IMR-90 (cell line): ENCODE measurements at regions of chr2 and their contacts with region 1.

Region 1: DNA sequence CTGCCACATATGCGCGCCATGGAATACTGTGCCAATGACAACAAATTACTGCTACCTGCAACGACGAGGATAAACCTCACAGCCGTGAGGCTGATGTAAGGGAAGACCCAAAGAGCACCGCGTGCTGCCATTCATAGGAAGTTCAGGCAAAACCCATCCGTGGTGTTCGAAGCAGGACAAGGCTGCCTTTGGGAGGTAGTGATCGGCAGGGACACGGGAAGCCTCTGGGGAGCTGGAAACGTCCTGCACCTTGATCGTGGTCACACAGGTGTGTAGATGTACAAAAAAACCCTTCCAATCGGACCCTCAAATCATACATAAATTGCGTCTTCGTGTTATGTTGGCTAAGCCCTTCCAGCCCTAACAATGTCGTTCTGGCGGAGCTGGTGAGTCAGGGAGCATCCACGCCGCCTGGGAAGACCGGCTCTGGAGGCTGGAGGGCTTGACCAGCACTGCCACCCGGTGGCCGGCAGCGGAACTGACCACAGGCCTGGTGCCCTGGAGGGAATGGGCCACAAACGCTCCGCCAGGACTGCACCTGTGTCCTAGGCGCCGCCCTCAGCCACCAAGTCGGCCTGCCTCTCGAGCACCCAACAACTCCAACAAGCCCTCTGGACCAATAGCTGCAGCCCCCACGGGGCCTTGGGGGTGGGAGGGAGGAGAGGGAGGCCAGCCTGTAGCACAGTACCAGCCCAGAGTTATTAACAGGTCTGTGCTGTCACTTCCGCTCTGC is 4.1 kb upstream of the NEURL3 start:
- DNase-seq: peak; percentile 84
- ATAC-seq: peak; percentile 99
- H3K4me3 ChIP-seq: no peak overlapping the region
- H3K27ac ChIP-seq: no peak overlapping the region
- H3K4me1 ChIP-seq: peaks cover 5% of the 10 kb centered on the region
- H3K27me3 ChIP-seq: peaks cover 31% of the 10 kb centered on the region
- CTCF ChIP-seq: peak; percentile 97
- POLR2A ChIP-seq: 0 out of 2 replicates have a peak, but pooled peaks have one; percentile 43
- RAD21 ChIP-seq: peak; percentile 98

Region 2: DNA sequence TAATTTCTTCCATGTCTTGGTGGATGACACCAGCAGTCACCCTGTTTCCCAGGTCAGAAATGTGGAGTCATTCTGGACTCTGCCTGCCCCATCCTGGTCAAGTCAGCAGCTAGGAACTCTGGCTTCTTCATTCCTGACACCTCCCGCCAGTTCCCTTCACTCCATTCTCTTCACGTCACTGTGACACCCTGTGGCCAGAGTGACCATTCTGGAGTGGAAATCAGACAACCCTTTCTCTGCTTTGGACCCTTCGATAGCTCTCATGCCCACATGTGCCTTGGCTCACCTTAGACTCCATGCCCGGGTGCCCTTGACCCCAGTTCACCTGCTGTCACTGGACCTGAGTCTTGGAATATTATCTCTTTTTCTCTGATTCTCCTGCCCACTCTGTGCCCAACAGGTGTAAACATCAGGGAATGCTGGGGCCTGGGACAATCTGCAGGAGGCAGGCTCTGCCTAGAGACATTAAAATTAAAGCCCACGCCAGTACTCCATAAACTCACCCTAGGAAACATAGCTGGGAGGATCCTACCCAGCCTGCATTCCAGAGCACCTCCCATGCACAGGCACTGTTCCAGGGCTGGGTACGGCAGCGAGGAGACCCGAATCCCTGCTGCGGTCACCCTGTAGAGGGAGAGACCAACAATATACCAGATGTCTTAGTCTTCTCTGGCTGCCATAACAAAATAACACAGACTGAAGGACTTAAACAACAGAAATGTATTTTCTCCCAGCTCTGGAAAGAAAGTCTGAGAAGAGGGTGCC is 1147.9 kb before region 1 on chr2:
- CTCF ChIA-PET with region 1: no interaction called
- POLR2A ChIA-PET with region 1: no interaction called
- dilution Hi-C with region 1: no loop called
- in situ Hi-C with region 1: no loop called
- intact Hi-C with region 1: no loop called
- DNase-seq: no peak
- ATAC-seq: no peak
- H3K4me3 ChIP-seq: no peak overlapping the region
- H3K27ac ChIP-seq: no peak overlapping the region
- H3K4me1 ChIP-seq: peaks cover 5% of the 10 kb centered on the region; the same call in 1 of the 2 replicates
- H3K27me3 ChIP-seq: peaks cover 2% of the 10 kb centered on the region; the same call in 1 of the 2 replicates
- CTCF ChIP-seq: no peak
- POLR2A ChIP-seq: no peak
- RAD21 ChIP-seq: no peak

Region 3: DNA sequence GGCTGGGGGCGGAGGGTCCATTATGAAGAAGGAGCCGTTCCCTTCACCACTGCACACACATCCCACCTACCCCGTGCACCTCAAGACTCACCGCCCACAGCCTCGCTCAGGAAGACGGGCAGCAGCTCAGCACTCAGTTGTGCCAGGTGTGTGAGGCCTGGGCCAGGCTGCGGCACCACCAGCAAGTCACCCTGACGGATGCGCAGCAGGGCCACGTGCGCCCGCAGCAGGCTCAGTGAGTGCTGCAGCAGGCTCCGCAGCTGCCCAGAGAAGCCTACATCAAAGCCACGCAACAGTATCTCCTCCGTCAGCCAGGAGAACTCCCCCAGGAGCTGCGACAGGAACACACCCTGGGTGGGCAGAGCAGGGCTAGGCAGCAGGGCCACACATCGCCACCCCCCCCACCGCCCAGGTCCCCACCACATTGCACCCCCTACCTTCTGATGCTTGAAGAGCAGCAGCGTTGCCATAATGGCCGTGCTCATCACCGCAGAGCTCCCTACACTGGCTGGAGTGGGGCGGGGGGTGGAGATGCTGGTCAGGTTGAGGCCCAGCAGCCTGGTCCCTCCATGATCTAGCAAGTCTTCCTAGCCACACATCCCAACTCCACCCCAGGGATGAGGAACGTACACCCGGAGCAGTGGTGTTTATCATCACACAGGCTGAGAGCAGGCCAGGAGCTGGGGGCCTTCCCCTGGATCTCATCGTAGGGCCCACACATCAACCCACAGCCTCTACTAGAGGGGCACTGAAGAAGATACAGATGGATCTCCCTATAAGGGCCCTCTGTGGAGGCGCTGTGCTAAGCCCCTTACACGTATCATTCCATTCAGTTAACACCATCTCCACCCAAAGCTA is 484.7 kb before region 1 on chr2:
- CTCF ChIA-PET with region 1: interaction called, 3 read pairs
- POLR2A ChIA-PET with region 1: no interaction called
- dilution Hi-C with region 1: no loop called
- in situ Hi-C with region 1: loop called (anchors 25 kb)
- intact Hi-C with region 1: no loop called
- DNase-seq: no peak
- ATAC-seq: no peak
- H3K4me3 ChIP-seq: no peak overlapping the region
- H3K27ac ChIP-seq: no peak overlapping the region
- H3K4me1 ChIP-seq: no peaks in the 10 kb centered on the region
- H3K27me3 ChIP-seq: no peaks in the 10 kb centered on the region
- CTCF ChIP-seq: no peak
- POLR2A ChIP-seq: no peak
- RAD21 ChIP-seq: no peak

Region 4: DNA sequence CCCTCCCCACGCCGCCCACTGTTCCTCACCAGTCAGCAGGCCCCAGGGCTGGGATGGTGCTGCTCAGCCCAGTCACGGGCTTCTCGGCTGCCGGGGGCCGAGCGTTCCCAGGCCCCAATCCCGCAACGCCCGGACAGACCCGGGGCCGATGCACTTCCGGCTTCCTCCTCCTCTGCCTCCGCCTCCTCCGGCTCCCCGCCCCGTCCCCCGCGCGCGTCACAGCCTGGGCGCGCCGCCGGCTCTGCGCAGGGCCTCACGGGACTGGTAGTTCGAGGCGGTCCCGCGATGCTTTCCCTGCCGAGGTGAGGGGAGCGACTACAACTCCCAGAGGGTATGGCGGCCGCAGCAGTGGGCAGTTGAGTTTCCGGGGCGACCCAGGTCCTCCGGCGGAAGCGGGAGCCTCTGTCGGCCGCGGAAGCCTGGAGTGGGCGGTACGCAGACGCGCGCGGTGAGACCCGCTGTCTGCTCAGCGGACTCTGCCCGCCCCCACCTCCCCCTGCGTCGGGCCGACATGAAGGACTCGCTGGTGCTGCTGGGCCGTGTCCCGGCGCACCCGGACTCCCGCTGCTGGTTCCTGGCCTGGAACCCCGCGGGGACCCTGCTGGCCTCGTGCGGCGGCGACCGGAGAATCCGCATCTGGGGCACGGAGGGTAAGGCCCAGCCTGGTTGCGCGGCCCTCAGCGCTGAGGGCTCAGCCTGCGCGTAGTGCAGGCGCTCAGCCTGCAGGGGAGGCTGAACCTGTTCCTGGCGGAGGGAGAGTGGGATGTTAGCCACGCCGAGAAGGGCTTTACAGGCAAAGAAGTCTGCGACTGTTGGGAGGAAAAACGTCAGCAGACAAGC is 243.2 kb before region 1 on chr2 and contains the starts of genes CIAO1 and TMEM127:
- CTCF ChIA-PET with region 1: no interaction called
- POLR2A ChIA-PET with region 1: no interaction called
- dilution Hi-C with region 1: no loop called
- in situ Hi-C with region 1: no loop called
- intact Hi-C with region 1: loop called (anchors 2 kb)
- DNase-seq: peak; percentile 98
- ATAC-seq: peak; percentile 97
- H3K4me3 ChIP-seq: peak within 1 kb of the TSS; percentile 84
- H3K27ac ChIP-seq: peak within 1 kb of the TSS; percentile 82
- H3K4me1 ChIP-seq: peaks cover 5% of the 10 kb centered on the region
- H3K27me3 ChIP-seq: no peaks in the 10 kb centered on the region
- CTCF ChIP-seq: 0 out of 2 replicates have a peak, but pooled peaks have one; percentile 17
- POLR2A ChIP-seq: peak; percentile 84
- RAD21 ChIP-seq: no peak; the same call in 1 of the 2 replicates
- total RNA-seq, gene CIAO1: 85.5 and 94.3 TPM in 2 replicates
- total RNA-seq, gene TMEM127: 20.0 and 35.7 TPM in 2 replicates

Region 5: GRCh38 chr2:96407041-96407918 is 102.0 kb before region 1 on chr2:
- CTCF ChIA-PET with region 1: interaction called, 10 read pairs
- POLR2A ChIA-PET with region 1: no interaction called
- dilution Hi-C with region 1: no loop called
- in situ Hi-C with region 1: loop called (anchors 5 kb)
- intact Hi-C with region 1: loop called (anchors 1 kb)
- DNase-seq: peak; percentile 79
- ATAC-seq: peak; percentile 97
- H3K4me3 ChIP-seq: no peak overlapping the region
- H3K27ac ChIP-seq: no peak overlapping the region
- H3K4me1 ChIP-seq: peaks cover 2% of the 10 kb centered on the region; the same call in 1 of the 2 replicates
- H3K27me3 ChIP-seq: peaks cover 37% of the 10 kb centered on the region
- CTCF ChIP-seq: peak; percentile 81
- POLR2A ChIP-seq: no peak
- RAD21 ChIP-seq: peak; percentile 74

Region 6: DNA sequence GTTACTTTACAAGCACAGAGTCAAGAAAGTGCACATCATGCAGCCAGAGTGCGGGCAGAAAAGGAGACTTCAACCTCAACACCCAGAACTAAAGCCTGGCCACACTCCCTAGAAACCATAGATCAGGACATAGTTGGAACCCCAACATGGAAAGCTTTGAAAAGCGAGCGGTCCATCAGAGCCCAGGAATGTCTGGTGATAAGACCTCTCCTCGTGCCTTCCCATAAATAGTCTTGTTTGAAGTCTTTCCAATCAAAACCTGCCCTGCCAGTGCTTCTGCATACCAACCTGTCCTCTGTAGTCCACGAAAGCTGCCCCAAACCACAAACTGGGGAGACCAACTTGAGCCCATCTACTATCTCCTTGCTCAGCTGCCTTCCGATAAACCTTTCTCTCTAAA is 59.6 kb before region 1 on chr2:
- CTCF ChIA-PET with region 1: no interaction called
- POLR2A ChIA-PET with region 1: no interaction called
- dilution Hi-C with region 1: no loop called
- in situ Hi-C with region 1: no loop called
- intact Hi-C with region 1: no loop called
- DNase-seq: no peak
- ATAC-seq: no peak
- H3K4me3 ChIP-seq: no peak overlapping the region
- H3K27ac ChIP-seq: no peak overlapping the region
- H3K4me1 ChIP-seq: no peaks in the 10 kb centered on the region
- H3K27me3 ChIP-seq: peaks cover 14% of the 10 kb centered on the region
- CTCF ChIP-seq: no peak
- POLR2A ChIP-seq: no peak
- RAD21 ChIP-seq: no peak

Region 7: GRCh38 chr2:96554293-96555145 is 45.2 kb after region 1 on chr2:
- CTCF ChIA-PET with region 1: interaction called, 3 read pairs
- POLR2A ChIA-PET with region 1: no interaction called
- dilution Hi-C with region 1: no loop called
- in situ Hi-C with region 1: no loop called
- intact Hi-C with region 1: loop called (anchors 1 kb)
- DNase-seq: peak; percentile 41
- ATAC-seq: peak; percentile 90
- H3K4me3 ChIP-seq: no peak overlapping the region
- H3K27ac ChIP-seq: no peak overlapping the region
- H3K4me1 ChIP-seq: no peaks in the 10 kb centered on the region
- H3K27me3 ChIP-seq: no peaks in the 10 kb centered on the region
- CTCF ChIP-seq: peak; percentile 78
- POLR2A ChIP-seq: no peak
- RAD21 ChIP-seq: peak; percentile 85